ENCODE measurements at regions of chr1 and their contacts with region 1.

Region 1: GRCh38 chr1:62417361-62417999 is 19.4 kb upstream of the USP1 start:
- DNase-seq: no peak
- H3K4me3 ChIP-seq: no peak overlapping the region
- H3K27ac ChIP-seq: no peak overlapping the region
- H3K4me1 ChIP-seq: no peaks in the 10 kb centered on the region
- CTCF ChIP-seq: no peak

Region 2: DNA sequence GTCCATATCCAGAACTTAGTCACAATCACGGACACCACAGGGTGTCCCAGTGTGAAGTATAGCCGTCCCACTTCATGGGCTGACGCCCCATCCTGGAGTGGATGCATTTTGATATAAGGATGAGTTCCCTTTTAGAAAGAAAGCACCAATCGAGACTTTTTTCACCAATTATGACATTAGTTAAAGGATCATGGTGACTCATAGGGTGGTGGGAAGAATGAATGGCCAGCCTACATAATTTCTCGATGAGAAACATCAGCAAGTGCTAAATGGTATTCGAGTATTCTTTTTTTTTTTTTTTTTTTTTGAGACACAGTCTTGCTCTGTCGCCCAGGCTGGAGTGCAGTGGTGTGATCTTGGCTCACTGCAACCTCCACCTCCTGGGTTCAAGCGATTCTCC is 19.1 kb before region 1 on chr1:
- CTCF ChIA-PET with region 1: no interaction called
- POLR2A ChIA-PET with region 1: no interaction called
- intact Hi-C with region 1: no loop called
- DNase-seq: no peak
- H3K4me3 ChIP-seq: no peak overlapping the region
- H3K27ac ChIP-seq: no peak overlapping the region
- H3K4me1 ChIP-seq: no peaks in the 10 kb centered on the region
- CTCF ChIP-seq: no peak

Region 3: GRCh38 chr1:62429581-62429980 is 12.1 kb after region 1 on chr1:
- CTCF ChIA-PET with region 1: interaction called, 3 read pairs
- POLR2A ChIA-PET with region 1: interaction called, 14 read pairs
- intact Hi-C with region 1: no loop called
- DNase-seq: no peak
- H3K4me3 ChIP-seq: no peak overlapping the region
- H3K27ac ChIP-seq: no peak overlapping the region
- H3K4me1 ChIP-seq: peaks cover 30% of the 10 kb centered on the region
- CTCF ChIP-seq: no peak